ENCODE measurements at regions of chr9 and their contacts with region 1.

Region 1: GRCh38 chr9:125255781-125256391 is 5.7 kb upstream of the GAPVD1 start:
- DNase-seq: peak; percentile 47 to 69
- H3K4me3 ChIP-seq: no peak overlapping the region
- H3K4me3 Mint-ChIP-seq: no peak overlapping the region
- H3K27ac Mint-ChIP-seq: no peak overlapping the region
- H3K4me1 ChIP-seq: 0 out of 2 replicates have a peak, but pooled peaks cover 4% of the 10 kb centered on the region
- H3K4me1 Mint-ChIP-seq: peaks cover 4% of the 10 kb centered on the region
- H3K27me3 ChIP-seq: no peaks in the 10 kb centered on the region
- H3K27me3 Mint-ChIP-seq: no peaks in the 10 kb centered on the region
- CTCF ChIP-seq: peak; percentile 56 to 62

Region 2: GRCh38 chr9:125337240-125337639 is 81.4 kb after region 1 on chr9:
- CTCF ChIA-PET with region 1: interaction called, 13 read pairs
- POLR2A ChIA-PET with region 1: no interaction called
- intact Hi-C with region 1: loop called (anchors 1 kb)
- DNase-seq: peak; percentile 47
- H3K4me3 ChIP-seq: no peak overlapping the region
- H3K4me3 Mint-ChIP-seq: no peak overlapping the region
- H3K27ac Mint-ChIP-seq: no peak overlapping the region
- H3K4me1 ChIP-seq: no peaks in the 10 kb centered on the region
- H3K4me1 Mint-ChIP-seq: no peaks in the 10 kb centered on the region
- H3K27me3 ChIP-seq: no peaks in the 10 kb centered on the region
- H3K27me3 Mint-ChIP-seq: no peaks in the 10 kb centered on the region
- CTCF ChIP-seq: peak in 1 of 2 experiments; percentile 23

Region 3: GRCh38 chr9:125361837-125362531 is 106.1 kb after region 1 on chr9:
- CTCF ChIA-PET with region 1: interaction called, 31 read pairs
- POLR2A ChIA-PET with region 1: no interaction called
- intact Hi-C with region 1: no loop called
- DNase-seq: peak in 1 of 2 experiments; percentile 51
- H3K4me3 ChIP-seq: no peak overlapping the region
- H3K4me3 Mint-ChIP-seq: no peak overlapping the region
- H3K27ac Mint-ChIP-seq: no peak overlapping the region
- H3K4me1 ChIP-seq: no peaks in the 10 kb centered on the region
- H3K4me1 Mint-ChIP-seq: no peaks in the 10 kb centered on the region
- H3K27me3 ChIP-seq: no peaks in the 10 kb centered on the region
- H3K27me3 Mint-ChIP-seq: no peaks in the 10 kb centered on the region
- CTCF ChIP-seq: peak; percentile 40 to 47

Region 4: GRCh38 chr9:125374443-125375309 is 118.8 kb after region 1 on chr9:
- CTCF ChIA-PET with region 1: interaction called, 10 read pairs
- POLR2A ChIA-PET with region 1: no interaction called
- intact Hi-C with region 1: loop called (anchors 1 kb)
- DNase-seq: peak; percentile 81
- H3K4me3 ChIP-seq: peak overlapping the region; percentile 21
- H3K4me3 Mint-ChIP-seq: peak overlapping the region; percentile 67
- H3K27ac Mint-ChIP-seq: peak overlapping the region; percentile 44
- H3K4me1 ChIP-seq: no peaks in the 10 kb centered on the region
- H3K4me1 Mint-ChIP-seq: peaks cover 13% of the 10 kb centered on the region
- H3K27me3 ChIP-seq: no peaks in the 10 kb centered on the region
- H3K27me3 Mint-ChIP-seq: no peaks in the 10 kb centered on the region
- CTCF ChIP-seq: peak; percentile 80 to 88